BJ (cell line): ENCODE measurements at regions of chr12 and their contacts with region 1.

Region 1: GRCh38 chr12:69278814-69279782 is 39.7 kb downstream of the CPSF6 start:
- DNase-seq: no peak
- H3K4me3 ChIP-seq: no peak overlapping the region
- H3K27me3 ChIP-seq: no peaks in the 10 kb centered on the region; the same call in 1 of the 2 replicates
- CTCF ChIP-seq: no peak

Region 2: GRCh38 chr12:69290545-69291277 is 11.6 kb after region 1 on chr12:
- CTCF ChIA-PET with region 1: interaction called, 17 read pairs
- POLR2A ChIA-PET with region 1: no interaction called
- DNase-seq: no peak
- H3K4me3 ChIP-seq: no peak overlapping the region
- H3K27me3 ChIP-seq: no peaks in the 10 kb centered on the region; the same call in 1 of the 2 replicates
- CTCF ChIP-seq: peak; percentile 89